CD8-positive, alpha-beta T cell (primary cell): ENCODE measurements at regions of chr4 and their contacts with region 1.

Region 1: DNA sequence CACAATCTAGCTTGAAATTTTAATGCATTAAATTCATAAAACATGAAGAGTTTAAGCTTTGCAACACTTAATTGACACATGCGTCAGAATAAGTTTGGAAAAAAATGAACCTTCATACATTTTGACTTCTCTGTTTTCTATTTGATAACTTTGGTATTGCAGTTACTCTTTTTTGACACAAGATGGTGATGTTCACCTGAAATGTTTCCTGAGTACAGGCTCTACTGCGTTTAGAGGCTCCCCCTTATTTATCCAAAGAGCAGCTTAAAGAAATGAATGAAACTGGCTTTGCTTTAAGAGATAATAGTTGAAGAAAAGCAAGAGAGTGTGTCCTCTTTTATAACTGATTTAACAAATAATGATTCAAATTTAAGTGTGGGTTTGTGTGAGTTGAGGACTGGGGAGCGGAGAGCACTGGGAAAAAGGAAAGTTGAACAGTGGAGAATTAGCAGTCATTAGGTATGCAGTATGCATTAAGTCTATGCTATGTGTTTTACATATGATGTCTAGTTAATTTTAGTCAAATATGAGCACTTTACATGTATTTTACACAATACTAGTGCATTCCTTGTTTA is 180.6 kb upstream of the NUDT6 start:
- DNase-seq: peak in 2 of 9 experiments; percentile 16 to 38
- ATAC-seq: peak; percentile 49
- H3K4me3 ChIP-seq: no peak overlapping the region
- H3K4me3 Mint-ChIP-seq: no peak overlapping the region
- H3K27ac ChIP-seq: no peak overlapping the region
- H3K27ac Mint-ChIP-seq: no peak overlapping the region
- H3K4me1 ChIP-seq: no peaks in the 10 kb centered on the region
- H3K4me1 Mint-ChIP-seq: no peaks in the 10 kb centered on the region
- H3K27me3 ChIP-seq: no peaks in the 10 kb centered on the region
- H3K27me3 Mint-ChIP-seq: no peaks in the 10 kb centered on the region
- CTCF ChIP-seq: peak; percentile 61

Region 2: GRCh38 chr4:123073650-123074049 is 29.3 kb before region 1 on chr4:
- CTCF ChIA-PET with region 1: no interaction called
- POLR2A ChIA-PET with region 1: no interaction called
- intact Hi-C with region 1: no loop called
- DNase-seq: no peak
- ATAC-seq: no peak
- H3K4me3 ChIP-seq: no peak overlapping the region
- H3K4me3 Mint-ChIP-seq: no peak overlapping the region
- H3K27ac ChIP-seq: no peak overlapping the region
- H3K27ac Mint-ChIP-seq: no peak overlapping the region
- H3K4me1 ChIP-seq: no peaks in the 10 kb centered on the region
- H3K4me1 Mint-ChIP-seq: no peaks in the 10 kb centered on the region
- H3K27me3 ChIP-seq: no peaks in the 10 kb centered on the region
- H3K27me3 Mint-ChIP-seq: no peaks in the 10 kb centered on the region
- CTCF ChIP-seq: no peak

Region 3: GRCh38 chr4:123229286-123229685 is 126.3 kb after region 1 on chr4:
- CTCF ChIA-PET with region 1: no interaction called
- POLR2A ChIA-PET with region 1: no interaction called
- intact Hi-C with region 1: no loop called
- DNase-seq: no peak
- ATAC-seq: no peak
- H3K4me3 ChIP-seq: no peak overlapping the region
- H3K4me3 Mint-ChIP-seq: no peak overlapping the region
- H3K27ac ChIP-seq: no peak overlapping the region
- H3K27ac Mint-ChIP-seq: no peak overlapping the region
- H3K4me1 ChIP-seq: no peaks in the 10 kb centered on the region
- H3K4me1 Mint-ChIP-seq: no peaks in the 10 kb centered on the region
- H3K27me3 ChIP-seq: no peaks in the 10 kb centered on the region
- H3K27me3 Mint-ChIP-seq: no peaks in the 10 kb centered on the region
- CTCF ChIP-seq: no peak

Region 4: DNA sequence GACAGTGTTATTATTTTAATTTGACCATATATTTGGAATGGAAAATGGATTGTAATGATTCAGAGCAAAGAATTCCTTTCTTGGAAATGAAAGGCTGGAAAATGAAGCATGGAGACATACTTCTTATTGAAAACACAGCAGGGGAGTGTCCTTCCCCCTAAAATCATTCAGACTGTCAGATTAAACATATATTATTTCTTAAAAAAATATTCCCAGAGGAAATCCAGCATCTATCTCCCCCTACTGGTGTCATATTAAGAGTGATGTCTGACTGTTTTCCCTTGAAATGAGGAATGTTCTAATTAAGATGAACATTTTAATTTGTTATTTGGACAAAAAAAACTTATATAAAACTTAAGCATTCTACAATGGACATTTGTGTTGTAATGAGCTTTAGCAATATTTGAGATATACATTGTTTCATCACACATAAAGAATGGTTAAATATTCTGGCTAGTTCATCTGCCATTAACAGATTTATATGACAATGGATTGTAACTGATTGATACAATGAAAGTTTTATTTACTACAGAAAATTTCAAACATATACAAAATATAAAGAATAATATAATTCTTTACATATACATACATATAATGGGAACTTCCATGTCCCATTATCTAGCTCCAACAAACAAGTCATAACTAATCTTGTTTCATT is 558.2 kb after region 1 on chr4:
- CTCF ChIA-PET with region 1: interaction called, 5 read pairs
- POLR2A ChIA-PET with region 1: no interaction called
- intact Hi-C with region 1: loop called in 1 of 2 experiments (anchors 2 kb)
- DNase-seq: peak in 2 of 9 experiments; percentile 20 to 40
- ATAC-seq: no peak
- H3K4me3 ChIP-seq: no peak overlapping the region
- H3K4me3 Mint-ChIP-seq: no peak overlapping the region
- H3K27ac ChIP-seq: no peak overlapping the region
- H3K27ac Mint-ChIP-seq: no peak overlapping the region
- H3K4me1 ChIP-seq: no peaks in the 10 kb centered on the region
- H3K4me1 Mint-ChIP-seq: no peaks in the 10 kb centered on the region
- H3K27me3 ChIP-seq: no peaks in the 10 kb centered on the region
- H3K27me3 Mint-ChIP-seq: no peaks in the 10 kb centered on the region
- CTCF ChIP-seq: peak; percentile 57

Region 5: GRCh38 chr4:124262211-124263179 is 1159.5 kb after region 1 on chr4:
- CTCF ChIA-PET with region 1: interaction called, 3 read pairs
- POLR2A ChIA-PET with region 1: no interaction called
- intact Hi-C with region 1: loop called (anchors 2 to 5 kb)
- DNase-seq: peak in 6 of 9 experiments; percentile 4 to 57 (median 28)
- ATAC-seq: no peak
- H3K4me3 ChIP-seq: no peak overlapping the region
- H3K4me3 Mint-ChIP-seq: no peak overlapping the region
- H3K27ac ChIP-seq: no peak overlapping the region
- H3K27ac Mint-ChIP-seq: no peak overlapping the region
- H3K4me1 ChIP-seq: no peaks in the 10 kb centered on the region
- H3K4me1 Mint-ChIP-seq: no peaks in the 10 kb centered on the region
- H3K27me3 ChIP-seq: no peaks in the 10 kb centered on the region
- H3K27me3 Mint-ChIP-seq: peaks cover 2% of the 10 kb centered on the region
- CTCF ChIP-seq: peak; percentile 51

Region 6: DNA sequence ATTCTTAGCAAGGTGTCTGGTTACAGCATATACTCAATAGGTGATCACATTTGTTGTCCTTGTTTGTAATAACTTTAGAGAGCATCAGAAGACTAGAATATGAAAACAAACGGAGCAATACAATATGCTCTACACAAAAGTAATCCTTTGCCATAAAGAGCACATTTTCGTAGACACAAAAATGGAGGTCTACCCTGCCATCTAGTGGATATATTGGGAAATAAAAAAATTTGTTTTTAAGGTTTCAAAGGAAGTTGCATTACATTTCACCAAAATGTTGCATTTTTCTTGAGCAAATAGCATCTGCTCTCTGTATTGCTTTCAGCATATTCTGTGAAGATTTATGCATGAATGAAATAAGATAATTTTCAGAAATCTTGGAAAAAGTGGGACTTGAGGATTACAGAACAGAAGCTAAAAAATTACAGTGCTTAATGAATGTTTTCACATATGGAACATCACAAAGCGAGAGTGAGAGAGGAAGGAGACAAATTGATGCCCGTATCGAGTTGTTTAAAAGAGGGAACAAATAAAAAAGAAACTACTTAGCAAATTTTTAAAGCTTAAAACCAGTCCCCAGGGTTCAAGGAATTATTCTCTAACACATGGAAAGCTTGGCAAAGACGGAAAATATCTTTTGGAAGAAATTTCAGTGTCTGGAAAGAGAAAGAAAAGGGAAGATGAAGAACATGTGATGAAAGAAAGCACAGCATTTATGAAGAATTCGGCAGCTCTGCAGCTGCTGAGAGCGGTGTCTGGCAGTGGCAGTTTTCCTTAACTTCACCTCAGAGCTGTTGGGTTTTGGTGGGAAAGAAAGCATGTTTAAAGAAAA is 1219.5 kb after region 1 on chr4:
- CTCF ChIA-PET with region 1: interaction called, 5 read pairs
- POLR2A ChIA-PET with region 1: no interaction called
- intact Hi-C with region 1: loop called in 1 of 2 experiments (anchors 1 kb)
- DNase-seq: peak in 2 of 9 experiments; percentile 13 to 23
- ATAC-seq: no peak
- H3K4me3 ChIP-seq: no peak overlapping the region
- H3K4me3 Mint-ChIP-seq: no peak overlapping the region
- H3K27ac ChIP-seq: no peak overlapping the region
- H3K27ac Mint-ChIP-seq: no peak overlapping the region
- H3K4me1 ChIP-seq: no peaks in the 10 kb centered on the region
- H3K4me1 Mint-ChIP-seq: no peaks in the 10 kb centered on the region
- H3K27me3 ChIP-seq: no peaks in the 10 kb centered on the region
- H3K27me3 Mint-ChIP-seq: peaks cover 2% of the 10 kb centered on the region
- CTCF ChIP-seq: peak; percentile 74